Activated CD4-positive, alpha-beta memory T cell treated with anti-CD3 and anti-CD28 coated beads for 36 hours (primary cell): ENCODE measurements at regions of chr9 and their contacts with region 1.

Region 1: DNA sequence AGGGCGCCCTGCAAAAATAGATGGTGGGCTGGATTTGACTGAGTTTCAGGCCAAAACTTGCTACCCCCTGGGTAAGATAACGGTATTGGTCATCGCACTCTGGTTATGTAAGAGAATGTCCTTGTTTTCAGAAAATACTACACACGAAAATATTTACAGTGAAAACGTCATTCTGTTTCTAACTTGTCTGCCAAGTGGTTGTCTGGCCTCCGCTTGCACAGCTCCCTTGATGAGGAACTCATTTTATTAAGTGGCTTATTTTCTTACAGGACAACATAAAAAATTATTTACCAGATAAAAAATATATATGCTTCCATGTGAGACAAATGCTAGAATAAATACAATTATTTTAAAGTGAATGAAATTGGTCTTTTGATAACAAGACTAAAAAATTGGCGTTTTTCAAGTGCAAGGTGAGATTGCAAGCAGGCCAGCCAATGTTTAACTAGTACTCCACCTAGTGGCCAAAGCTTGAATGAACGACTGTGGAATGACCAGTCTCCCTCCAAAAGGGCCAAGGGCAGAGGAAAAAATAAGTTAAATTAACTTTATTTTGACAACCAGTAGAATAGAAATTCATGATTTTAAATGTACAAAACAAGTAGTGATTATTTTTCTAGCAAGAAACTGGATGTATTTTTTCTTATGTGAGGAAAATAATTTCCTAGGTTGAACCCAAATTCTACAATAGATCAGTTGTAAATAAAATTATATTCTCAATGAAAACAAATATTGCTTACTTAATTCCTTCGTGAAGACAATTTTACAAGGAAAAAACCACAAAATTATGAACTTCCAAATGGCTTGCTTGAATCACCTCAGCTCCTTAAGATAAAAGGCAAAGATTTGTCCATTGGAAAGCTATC is 93.2 kb downstream of the ZFAND5 start:
- DNase-seq: peak; percentile 42
- H3K4me3 Mint-ChIP-seq: no peak overlapping the region
- H3K27ac Mint-ChIP-seq: no peak overlapping the region
- H3K4me1 Mint-ChIP-seq: no peaks in the 10 kb centered on the region
- H3K27me3 Mint-ChIP-seq: no peaks in the 10 kb centered on the region

Region 2: GRCh38 chr9:71647094-71647591 is 624.7 kb before region 1 on chr9:
- CTCF ChIA-PET with region 1: no interaction called
- POLR2A ChIA-PET with region 1: no interaction called
- intact Hi-C with region 1: no loop called
- DNase-seq: peak; percentile 20
- H3K4me3 Mint-ChIP-seq: no peak overlapping the region
- H3K27ac Mint-ChIP-seq: no peak overlapping the region
- H3K4me1 Mint-ChIP-seq: peaks cover 16% of the 10 kb centered on the region
- H3K27me3 Mint-ChIP-seq: peaks cover 1% of the 10 kb centered on the region

Region 3: GRCh38 chr9:72185561-72185960 is 86.3 kb before region 1 on chr9:
- CTCF ChIA-PET with region 1: no interaction called
- POLR2A ChIA-PET with region 1: no interaction called
- intact Hi-C with region 1: no loop called
- DNase-seq: no peak
- H3K4me3 Mint-ChIP-seq: no peak overlapping the region
- H3K27ac Mint-ChIP-seq: no peak overlapping the region
- H3K4me1 Mint-ChIP-seq: no peaks in the 10 kb centered on the region
- H3K27me3 Mint-ChIP-seq: peaks cover 9% of the 10 kb centered on the region

Region 4: DNA sequence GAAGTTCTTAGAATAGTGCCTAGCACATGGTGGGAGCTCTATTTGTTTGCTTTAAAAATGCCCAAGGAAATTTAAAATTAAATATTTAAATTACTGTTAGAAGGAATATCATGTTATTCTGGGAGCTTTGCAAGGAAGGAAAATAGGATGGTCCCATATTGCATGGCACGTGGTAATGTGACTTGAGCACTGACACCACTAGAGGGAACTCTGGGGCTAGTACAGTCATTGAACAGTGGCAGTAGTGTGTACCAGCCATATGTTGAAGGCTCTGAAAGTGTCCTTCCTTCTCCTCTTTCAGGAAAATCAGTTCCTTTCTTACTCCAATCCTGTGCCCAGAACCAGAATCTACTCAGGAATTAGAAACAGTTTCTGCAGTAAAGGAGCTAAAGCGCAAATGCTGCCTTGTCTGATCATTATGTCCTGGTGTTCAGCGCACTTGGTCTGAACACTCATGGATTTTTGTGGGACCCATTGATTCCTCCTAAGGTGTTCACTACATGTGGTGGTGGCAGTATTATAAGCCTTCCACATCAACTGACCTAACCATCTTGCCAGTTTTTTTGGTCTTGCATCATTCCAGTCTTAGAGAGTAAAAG is 68.5 kb before region 1 on chr9:
- CTCF ChIA-PET with region 1: interaction called, 3 read pairs
- POLR2A ChIA-PET with region 1: no interaction called
- intact Hi-C with region 1: loop called (anchors 1 kb)
- DNase-seq: no peak
- H3K4me3 Mint-ChIP-seq: no peak overlapping the region
- H3K27ac Mint-ChIP-seq: no peak overlapping the region
- H3K4me1 Mint-ChIP-seq: no peaks in the 10 kb centered on the region
- H3K27me3 Mint-ChIP-seq: peaks cover 2% of the 10 kb centered on the region

Region 5: GRCh38 chr9:72454871-72455491 is 183.1 kb after region 1 on chr9:
- CTCF ChIA-PET with region 1: no interaction called
- POLR2A ChIA-PET with region 1: no interaction called
- intact Hi-C with region 1: no loop called
- DNase-seq: no peak
- H3K4me3 Mint-ChIP-seq: no peak overlapping the region
- H3K27ac Mint-ChIP-seq: no peak overlapping the region
- H3K4me1 Mint-ChIP-seq: peaks cover 11% of the 10 kb centered on the region
- H3K27me3 Mint-ChIP-seq: no peaks in the 10 kb centered on the region